A549 (cell line): ENCODE measurements at regions of chr14 and their contacts with region 1.

Region 1: DNA sequence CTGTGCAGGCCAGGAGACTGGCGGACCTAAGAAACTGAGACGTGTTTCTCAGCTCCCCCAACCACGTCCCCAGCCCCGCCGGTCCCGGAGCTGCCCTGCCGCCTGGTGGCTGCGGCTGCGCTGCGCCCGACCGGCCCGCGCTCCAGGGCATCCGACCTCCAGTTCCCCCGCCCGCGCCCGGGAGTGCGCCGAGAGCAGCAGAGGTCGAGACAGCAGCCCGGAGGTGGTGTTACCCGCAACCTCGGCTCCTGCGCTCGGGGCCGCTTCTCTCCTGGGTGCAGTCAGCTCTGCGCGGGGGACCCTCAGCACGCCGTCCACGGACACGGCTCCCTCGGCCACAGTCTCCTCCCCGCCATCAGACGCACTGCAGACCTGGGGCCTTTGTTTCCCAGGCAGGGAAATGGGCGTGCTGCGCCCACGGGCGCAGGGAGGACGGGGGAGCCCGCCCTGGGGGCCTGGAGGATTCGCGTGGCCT is 21.6 kb upstream of the GPR132 start:
- DNase-seq: peak; percentile 63 to 85
- ATAC-seq: peak; percentile 20 to 47
- H3K4me3 ChIP-seq: peak overlapping the region; percentile 68
- H3K27ac ChIP-seq: peak overlapping the region; percentile 98 to 100
- H3K4me1 ChIP-seq: peaks cover 52% of the 10 kb centered on the region
- CTCF ChIP-seq: peak; percentile 54
- EP300 ChIP-seq: no peak
- POLR2A ChIP-seq: peak; percentile 40
- RAD21 ChIP-seq: peak; percentile 49 to 65; a peak in 4 of 5 replicates

Region 2: DNA sequence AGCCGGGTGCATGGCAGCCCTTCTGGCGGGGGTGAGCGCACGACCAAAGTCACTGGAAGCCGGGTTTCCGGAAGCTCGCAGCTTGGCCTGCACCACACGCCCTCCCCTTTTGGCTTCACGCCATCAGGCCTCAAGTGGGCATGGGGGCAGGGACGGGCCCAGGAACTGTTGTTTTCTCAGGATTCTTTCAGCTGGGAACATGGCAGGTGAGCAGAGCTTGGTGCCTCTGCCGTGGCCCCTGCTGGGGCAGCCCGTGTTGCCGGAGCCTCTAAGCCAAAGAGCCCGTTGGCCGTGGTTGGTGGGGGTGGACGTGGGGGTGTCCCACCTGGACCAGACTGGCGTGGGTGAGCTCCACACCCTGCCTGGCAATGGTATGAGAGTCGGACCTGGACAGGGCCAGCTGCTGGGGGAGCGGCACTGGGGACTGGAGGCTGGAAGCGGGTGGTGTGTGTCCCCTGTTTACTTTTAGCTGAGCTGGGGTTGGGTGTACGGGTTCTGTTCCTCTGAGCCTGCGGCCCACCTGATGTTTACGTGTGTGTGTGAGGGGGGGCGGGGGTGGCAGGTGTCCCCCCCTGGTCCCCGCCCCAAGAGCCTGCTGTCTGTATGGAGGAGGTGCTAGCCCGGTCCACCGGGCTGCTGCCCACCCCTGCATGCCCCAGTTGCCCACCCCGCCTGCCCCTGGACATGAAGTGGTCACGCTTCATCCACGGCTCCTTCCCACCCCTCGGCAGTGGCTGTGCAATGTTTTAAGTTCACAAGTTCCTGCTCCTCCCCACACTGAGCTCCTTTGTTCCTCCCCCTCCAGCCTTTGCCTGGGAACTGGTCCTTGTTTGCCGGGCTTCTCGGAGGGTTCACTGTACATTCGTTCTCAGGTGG is 190.8 kb before region 1 on chr14:
- CTCF ChIA-PET with region 1: interaction called, 11 read pairs
- POLR2A ChIA-PET with region 1: no interaction called
- DNase-seq: no peak
- ATAC-seq: peak; percentile 9 to 30; a peak in 3 of 6 replicates
- H3K4me3 ChIP-seq: no peak overlapping the region
- H3K27ac ChIP-seq: no peak overlapping the region
- H3K4me1 ChIP-seq: peaks cover 15% of the 10 kb centered on the region
- CTCF ChIP-seq: no peak
- EP300 ChIP-seq: no peak
- POLR2A ChIP-seq: no peak
- RAD21 ChIP-seq: no peak

Region 3: GRCh38 chr14:105075379-105076295 is 11.2 kb before region 1 on chr14:
- CTCF ChIA-PET with region 1: interaction called, 40 read pairs
- POLR2A ChIA-PET with region 1: interaction called, 14 read pairs
- DNase-seq: no peak
- ATAC-seq: peak; percentile 5; a peak in 2 of 6 replicates
- H3K4me3 ChIP-seq: no peak overlapping the region
- H3K27ac ChIP-seq: peak overlapping the region in 1 of 2 experiments; percentile 50; a peak in 3 of 6 replicates
- H3K4me1 ChIP-seq: peaks cover 6% of the 10 kb centered on the region; the same call in 1 of the 3 replicates
- CTCF ChIP-seq: no peak
- EP300 ChIP-seq: no peak
- POLR2A ChIP-seq: no peak
- RAD21 ChIP-seq: no peak

Region 4: DNA sequence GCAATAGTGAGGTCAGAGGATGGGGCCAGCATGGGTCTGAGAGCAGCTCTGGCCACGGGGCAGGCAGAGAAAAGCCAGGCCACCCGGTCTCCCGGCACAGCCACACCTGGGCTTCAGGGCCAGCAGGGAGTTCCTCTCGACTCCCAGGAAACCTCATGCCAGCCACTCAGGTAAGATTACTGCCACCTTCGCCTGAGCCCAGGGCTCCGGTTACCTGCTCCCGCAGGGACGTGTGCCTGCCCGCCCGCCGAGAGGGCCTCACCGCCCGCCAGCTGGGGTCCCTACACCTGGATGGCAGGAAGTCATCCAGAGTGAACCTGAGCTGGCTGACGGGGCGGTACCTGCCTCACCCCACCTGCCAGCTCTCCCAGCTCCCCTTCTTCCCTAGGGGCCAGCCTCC is 74.4 kb after region 1 on chr14:
- CTCF ChIA-PET with region 1: interaction called, 132 read pairs
- POLR2A ChIA-PET with region 1: interaction called, 11 read pairs
- DNase-seq: no peak
- ATAC-seq: peak in 1 of 2 experiments; percentile 17; a peak in 1 of 6 replicates
- H3K4me3 ChIP-seq: no peak overlapping the region
- H3K27ac ChIP-seq: no peak overlapping the region
- H3K4me1 ChIP-seq: peaks cover 16% of the 10 kb centered on the region
- CTCF ChIP-seq: no peak
- EP300 ChIP-seq: no peak
- POLR2A ChIP-seq: no peak
- RAD21 ChIP-seq: no peak

Region 5: DNA sequence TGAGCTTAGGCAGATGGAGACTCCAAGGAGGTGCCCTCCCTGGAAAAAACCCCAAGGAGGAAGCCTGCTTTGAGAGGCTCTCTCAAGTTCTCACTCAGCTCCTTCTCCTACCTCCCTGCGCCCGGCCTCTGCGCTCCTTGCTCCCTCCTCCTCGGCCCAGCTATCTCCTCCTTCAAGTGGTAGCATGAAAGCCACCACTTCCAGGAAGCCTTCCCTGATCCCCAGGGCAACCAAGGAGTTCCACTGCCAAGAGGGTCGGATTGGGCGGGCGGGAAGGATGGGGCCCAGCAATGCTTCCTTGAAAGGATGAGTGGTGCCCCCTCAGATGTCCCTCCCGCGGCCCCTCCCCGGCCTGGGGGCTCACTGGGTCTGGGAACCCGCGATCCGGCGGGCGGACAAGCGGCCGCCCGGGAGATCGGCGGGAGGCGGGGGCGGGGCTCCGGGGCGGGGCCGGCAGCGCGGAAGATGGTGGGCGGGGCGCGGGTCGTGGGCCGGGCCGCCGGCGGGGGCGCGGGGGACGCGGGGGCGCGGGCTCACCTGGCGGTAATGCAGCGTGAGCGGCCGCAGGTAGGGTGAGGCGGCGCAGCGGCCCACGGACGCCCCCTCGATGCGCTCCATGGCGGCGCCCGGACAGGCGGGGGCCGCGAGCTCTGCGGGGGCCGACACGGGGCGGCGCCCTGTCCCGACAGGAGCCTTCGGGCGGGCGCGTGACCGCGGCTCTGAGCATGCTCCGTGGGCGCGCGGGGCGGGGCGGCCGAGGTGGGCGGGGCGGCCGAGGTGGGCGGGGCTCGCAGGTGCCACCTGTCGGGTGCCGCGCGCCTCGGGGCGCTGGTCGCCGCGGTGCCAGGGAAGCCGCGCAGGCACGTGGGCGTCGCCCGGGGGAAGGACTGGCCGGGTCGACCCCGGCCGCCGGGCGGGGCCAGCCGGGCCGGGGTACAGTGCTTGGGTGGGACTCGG is 94.0 kb after region 1 on chr14 and contains the start of gene NUDT14:
- CTCF ChIA-PET with region 1: interaction called, 132 read pairs
- POLR2A ChIA-PET with region 1: interaction called, 8 read pairs
- DNase-seq: peak; percentile 69 to 85
- ATAC-seq: peak; percentile 60 to 62
- H3K4me3 ChIP-seq: peak within 1 kb of the TSS; percentile 54
- H3K27ac ChIP-seq: peak within 1 kb of the TSS; percentile 84 to 96
- H3K4me1 ChIP-seq: peaks cover 18% of the 10 kb centered on the region; the same call in 2 of the 3 replicates
- CTCF ChIP-seq: no peak
- EP300 ChIP-seq: no peak
- POLR2A ChIP-seq: peak; percentile 45
- RAD21 ChIP-seq: no peak
- polyA plus RNA-seq, gene NUDT14: 11.3 and 12.6 TPM in 2 replicates

Region 6: DNA sequence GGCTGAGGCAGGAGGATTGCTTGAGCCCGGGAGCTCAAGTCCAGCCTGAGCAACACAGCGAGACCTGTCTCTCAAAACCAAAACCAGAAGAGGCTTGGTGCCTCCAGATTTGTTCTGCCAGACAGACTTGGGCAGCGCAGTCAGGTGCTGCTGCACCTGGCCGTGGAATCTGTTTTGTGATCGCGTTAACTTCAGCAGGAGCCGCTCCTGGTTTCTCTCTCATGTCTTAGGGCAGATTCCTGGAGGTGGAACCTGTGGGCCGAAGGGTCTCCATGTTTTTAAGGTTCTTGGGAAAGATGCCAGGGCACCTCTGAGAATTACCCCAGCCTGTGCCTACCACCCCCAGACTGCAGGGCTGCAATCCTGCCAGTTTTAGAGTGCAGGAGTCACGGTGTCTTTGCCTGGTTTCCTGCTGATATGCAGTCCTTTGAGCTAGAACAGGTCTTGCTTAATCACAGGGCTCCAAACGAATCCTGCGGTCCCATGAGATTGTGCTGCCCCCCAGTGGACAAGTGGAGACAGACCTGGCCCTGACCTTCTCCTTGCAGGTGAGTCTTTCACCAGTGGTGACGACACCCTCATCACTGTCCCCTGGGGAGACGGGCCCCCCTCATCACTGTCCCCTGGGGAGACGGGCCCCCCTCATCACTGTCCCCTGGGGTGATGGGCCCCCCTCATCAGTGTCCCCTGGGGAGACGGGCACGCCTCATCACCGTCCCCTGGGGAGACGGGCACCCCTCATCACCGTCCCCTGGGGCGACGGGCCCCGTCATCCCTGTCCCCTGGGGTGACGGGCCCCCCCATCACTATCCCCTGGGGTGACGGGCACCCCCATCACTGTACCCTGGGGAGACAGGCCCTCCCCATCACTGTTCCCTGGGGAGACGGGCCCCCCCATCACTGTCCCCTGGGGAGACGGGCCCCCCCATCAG is 265.3 kb after region 1 on chr14:
- CTCF ChIA-PET with region 1: interaction called, 15 read pairs
- POLR2A ChIA-PET with region 1: no interaction called
- DNase-seq: peak; percentile 90 to 93
- ATAC-seq: peak; percentile 91 to 95
- H3K4me3 ChIP-seq: no peak overlapping the region
- H3K27ac ChIP-seq: 0 out of 6 replicates have a peak overlapping the region, but pooled peaks of 1 of the 2 experiments have one; percentile 24
- H3K4me1 ChIP-seq: 0 out of 3 replicates have a peak, but pooled peaks cover 3% of the 10 kb centered on the region
- CTCF ChIP-seq: peak; percentile 78
- EP300 ChIP-seq: no peak
- POLR2A ChIP-seq: no peak
- RAD21 ChIP-seq: peak; percentile 85 to 95